CD8-positive, alpha-beta T cell (primary cell): ENCODE measurements at regions of chr3 and their contacts with region 1.

Region 1: GRCh38 chr3:40191850-40192448 is 117.6 kb upstream of the EIF1B start:
- DNase-seq: peak; percentile 8 to 70 (median 59)
- ATAC-seq: peak; percentile 78
- H3K4me3 ChIP-seq: no peak overlapping the region
- H3K4me3 Mint-ChIP-seq: no peak overlapping the region
- H3K27ac ChIP-seq: no peak overlapping the region
- H3K27ac Mint-ChIP-seq: no peak overlapping the region
- H3K4me1 ChIP-seq: no peaks in the 10 kb centered on the region
- H3K4me1 Mint-ChIP-seq: no peaks in the 10 kb centered on the region
- H3K27me3 ChIP-seq: no peaks in the 10 kb centered on the region
- H3K27me3 Mint-ChIP-seq: no peaks in the 10 kb centered on the region
- CTCF ChIP-seq: peak; percentile 83

Region 2: DNA sequence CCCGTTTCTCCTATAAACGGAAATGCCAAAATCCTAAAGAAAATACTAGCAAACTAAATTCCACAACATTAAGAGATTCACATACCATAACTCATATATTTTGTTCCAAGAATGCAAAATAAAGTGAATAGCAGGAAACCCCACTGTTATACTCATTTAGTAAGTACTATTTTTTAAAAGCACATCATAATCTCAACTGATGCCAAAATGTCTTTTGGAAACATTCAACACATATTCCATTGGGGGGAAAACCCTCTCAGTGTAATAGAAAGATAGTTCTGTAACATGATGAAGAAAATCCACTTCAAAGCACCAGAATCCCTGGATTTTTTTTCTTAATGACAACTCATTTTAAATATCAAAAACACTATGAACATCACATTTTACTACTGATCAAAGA is 24.5 kb after region 1 on chr3:
- CTCF ChIA-PET with region 1: interaction called, 8 read pairs
- POLR2A ChIA-PET with region 1: no interaction called
- intact Hi-C with region 1: loop called in 1 of 2 experiments (anchors 1 kb)
- DNase-seq: no peak
- ATAC-seq: no peak
- H3K4me3 ChIP-seq: no peak overlapping the region
- H3K4me3 Mint-ChIP-seq: no peak overlapping the region
- H3K27ac ChIP-seq: no peak overlapping the region
- H3K27ac Mint-ChIP-seq: no peak overlapping the region
- H3K4me1 ChIP-seq: no peaks in the 10 kb centered on the region
- H3K4me1 Mint-ChIP-seq: no peaks in the 10 kb centered on the region
- H3K27me3 ChIP-seq: no peaks in the 10 kb centered on the region
- H3K27me3 Mint-ChIP-seq: no peaks in the 10 kb centered on the region
- CTCF ChIP-seq: no peak